ENCODE measurements at regions of chr5 and their contacts with region 1.

Region 1: GRCh38 chr5:131796793-131797693 is at the start of gene FNIP1:
- DNase-seq: peak; percentile 96 to 99 (median 97)
- ATAC-seq: peak; percentile 98
- H3K4me3 ChIP-seq: peak within 1 kb of the TSS; percentile 90
- H3K4me3 Mint-ChIP-seq: peak within 1 kb of the TSS; percentile 88 to 99 (median 97)
- H3K27ac ChIP-seq: peak within 1 kb of the TSS; percentile 95
- H3K27ac Mint-ChIP-seq: peak within 1 kb of the TSS; percentile 92 to 98 (median 97)
- H3K4me1 ChIP-seq: peaks cover 0 to 19% of the 10 kb centered on the region in 2 donors
- H3K4me1 Mint-ChIP-seq: peaks cover 11 to 41% (median 36%) of the 10 kb centered on the region in 7 donors
- H3K27me3 ChIP-seq: no peaks in the 10 kb centered on the region
- H3K27me3 Mint-ChIP-seq: peaks cover 0 to 10% (median 0%) of the 10 kb centered on the region in 5 donors
- total RNA-seq, gene FNIP1: 30.5 to 48.5 (median 40.3) TPM

Region 2: DNA sequence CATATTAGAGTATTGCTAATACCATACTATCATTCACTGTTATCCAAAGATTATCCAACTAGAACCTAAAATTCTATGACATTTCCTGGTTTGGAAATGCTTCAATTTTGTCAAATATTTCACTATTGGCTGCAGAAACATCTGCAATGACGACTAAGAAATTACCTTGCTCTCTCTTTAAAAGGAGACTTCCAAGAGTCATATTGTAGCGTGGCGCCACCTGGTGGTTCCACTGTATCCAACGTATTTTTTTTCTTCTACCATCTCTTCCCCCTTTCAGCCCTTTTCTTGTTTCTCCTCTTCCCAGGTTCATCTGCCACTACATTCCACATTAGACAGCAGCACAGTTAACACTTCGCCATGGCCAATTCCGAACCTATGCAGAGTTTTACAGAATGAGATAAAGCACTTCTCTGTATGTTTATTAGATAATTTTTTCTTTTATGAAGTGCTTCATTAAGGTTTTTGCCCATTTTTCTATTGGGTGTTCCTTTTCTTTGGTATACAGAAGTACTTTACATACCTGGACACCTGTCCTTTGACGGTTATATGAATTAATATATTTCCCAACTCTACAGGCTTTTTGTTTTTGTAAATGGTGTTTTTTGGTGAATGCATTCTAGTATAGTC is 379.7 kb before region 1 on chr5:
- CTCF ChIA-PET with region 1: no interaction called
- POLR2A ChIA-PET with region 1: no interaction called
- intact Hi-C with region 1: loop called in 1 of 2 experiments (anchors 5 kb)
- DNase-seq: peak; percentile 61 to 78 (median 74)
- ATAC-seq: peak; percentile 81
- H3K4me3 ChIP-seq: no peak overlapping the region
- H3K4me3 Mint-ChIP-seq: peak overlapping the region in 7 of 10 donors; percentile 27 to 70 (median 45)
- H3K27ac ChIP-seq: peak overlapping the region; percentile 23
- H3K27ac Mint-ChIP-seq: peak overlapping the region; percentile 68 to 95 (median 81)
- H3K4me1 ChIP-seq: peaks cover 8 to 14% of the 10 kb centered on the region in 2 donors
- H3K4me1 Mint-ChIP-seq: peaks cover 17 to 52% (median 46%) of the 10 kb centered on the region in 7 donors
- H3K27me3 ChIP-seq: no peaks in the 10 kb centered on the region
- H3K27me3 Mint-ChIP-seq: no peaks in the 10 kb centered on the region

Region 3: GRCh38 chr5:131589510-131590348 is 207.3 kb before region 1 on chr5:
- CTCF ChIA-PET with region 1: interaction called, 11 read pairs
- POLR2A ChIA-PET with region 1: interaction called, 6 read pairs
- intact Hi-C with region 1: loop called (anchors 1 to 2 kb)
- DNase-seq: peak in 8 of 9 donors; percentile 8 to 71 (median 62)
- ATAC-seq: peak; percentile 80
- H3K4me3 ChIP-seq: no peak overlapping the region
- H3K4me3 Mint-ChIP-seq: no peak overlapping the region
- H3K27ac ChIP-seq: peak overlapping the region; percentile 9
- H3K27ac Mint-ChIP-seq: peak overlapping the region; percentile 10 to 75 (median 52)
- H3K4me1 ChIP-seq: peaks cover 4 to 5% of the 10 kb centered on the region in 2 donors
- H3K4me1 Mint-ChIP-seq: peaks cover 21 to 63% (median 58%) of the 10 kb centered on the region in 7 donors
- H3K27me3 ChIP-seq: no peaks in the 10 kb centered on the region
- H3K27me3 Mint-ChIP-seq: no peaks in the 10 kb centered on the region

Region 4: DNA sequence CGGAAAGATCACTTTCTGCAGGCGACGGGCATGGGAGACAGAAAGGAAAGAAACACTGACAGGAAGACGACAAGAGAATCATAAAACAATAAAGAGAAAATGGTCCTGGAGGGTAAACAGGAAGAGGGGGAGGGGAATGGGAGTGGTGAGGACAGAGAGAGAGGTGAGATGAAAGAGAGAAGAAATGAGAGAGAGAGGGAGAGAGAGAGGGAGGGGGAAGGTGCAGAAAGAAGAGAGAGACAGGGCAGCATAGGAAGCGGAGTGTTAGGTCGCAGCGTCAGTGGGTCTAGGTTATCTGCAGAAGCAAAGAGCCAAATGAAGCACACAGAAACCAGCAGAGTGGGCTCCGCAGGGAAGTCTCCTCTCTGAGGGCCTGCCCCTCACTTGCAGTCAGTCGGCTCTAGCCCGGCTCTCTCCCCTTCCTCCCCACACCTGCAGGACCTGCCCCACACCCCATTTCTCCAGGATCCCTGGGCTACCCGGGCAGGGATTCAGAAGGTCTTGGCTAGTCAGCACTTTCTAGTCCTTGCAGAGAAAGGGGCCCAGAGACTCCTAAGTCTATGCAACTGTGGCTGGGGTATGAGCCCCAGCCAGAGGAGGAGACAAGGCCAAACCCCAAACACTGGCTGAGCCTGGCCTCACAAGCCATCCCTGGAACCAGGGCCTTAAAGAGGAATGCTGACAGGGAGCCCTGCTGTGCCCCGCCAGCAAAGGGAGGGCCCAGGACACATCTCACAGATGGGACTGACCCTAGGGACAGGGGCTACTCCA is 178.1 kb after region 1 on chr5:
- CTCF ChIA-PET with region 1: no interaction called
- POLR2A ChIA-PET with region 1: no interaction called
- intact Hi-C with region 1: loop called in 1 of 2 experiments (anchors 1 kb)
- DNase-seq: peak in 7 of 9 donors; percentile 23 to 76 (median 65)
- ATAC-seq: peak; percentile 74
- H3K4me3 ChIP-seq: peak overlapping the region; percentile 61
- H3K4me3 Mint-ChIP-seq: peak overlapping the region; percentile 79 to 97 (median 84)
- H3K27ac ChIP-seq: peak overlapping the region; percentile 76
- H3K27ac Mint-ChIP-seq: peak overlapping the region; percentile 90 to 99 (median 95)
- H3K4me1 ChIP-seq: peaks cover 34 to 46% of the 10 kb centered on the region in 2 donors
- H3K4me1 Mint-ChIP-seq: peaks cover 34 to 85% (median 75%) of the 10 kb centered on the region in 7 donors
- H3K27me3 ChIP-seq: no peaks in the 10 kb centered on the region
- H3K27me3 Mint-ChIP-seq: peaks cover 0 to 7% (median 0%) of the 10 kb centered on the region in 5 donors

Region 5: GRCh38 chr5:132064738-132065331 is 267.8 kb after region 1 on chr5:
- CTCF ChIA-PET with region 1: no interaction called
- POLR2A ChIA-PET with region 1: no interaction called
- intact Hi-C with region 1: loop called in 1 of 2 experiments (anchors 1 kb)
- DNase-seq: peak; percentile 40 to 82 (median 64)
- ATAC-seq: peak; percentile 80
- H3K4me3 ChIP-seq: no peak overlapping the region
- H3K4me3 Mint-ChIP-seq: no peak overlapping the region
- H3K27ac ChIP-seq: no peak overlapping the region
- H3K27ac Mint-ChIP-seq: peak overlapping the region in 2 of 9 donors; percentile 30 to 79
- H3K4me1 ChIP-seq: peaks cover 0 to 9% of the 10 kb centered on the region in 2 donors
- H3K4me1 Mint-ChIP-seq: peaks cover 0 to 62% (median 5%) of the 10 kb centered on the region in 7 donors
- H3K27me3 ChIP-seq: no peaks in the 10 kb centered on the region
- H3K27me3 Mint-ChIP-seq: peaks cover 0 to 7% (median 0%) of the 10 kb centered on the region in 5 donors

Region 6: GRCh38 chr5:132866342-132867045 is 1069.5 kb after region 1 on chr5 and contains the starts of genes GDF9 and UQCRQ:
- CTCF ChIA-PET with region 1: no interaction called
- POLR2A ChIA-PET with region 1: no interaction called
- intact Hi-C with region 1: loop called in 1 of 2 experiments (anchors 5 kb)
- DNase-seq: peak; percentile 72 to 97 (median 93)
- ATAC-seq: peak; percentile 99
- H3K4me3 ChIP-seq: peak within 1 kb of the TSS; percentile 98
- H3K4me3 Mint-ChIP-seq: peak within 1 kb of the TSS; percentile 98 to 100 (median 100)
- H3K27ac ChIP-seq: peak within 1 kb of the TSS; percentile 96
- H3K27ac Mint-ChIP-seq: peak within 1 kb of the TSS; percentile 97 to 100 (median 100)
- H3K4me1 ChIP-seq: peaks cover 7 to 12% of the 10 kb centered on the region in 2 donors
- H3K4me1 Mint-ChIP-seq: peaks cover 11 to 36% (median 27%) of the 10 kb centered on the region in 7 donors
- H3K27me3 ChIP-seq: no peaks in the 10 kb centered on the region
- H3K27me3 Mint-ChIP-seq: peaks cover 0 to 8% (median 0%) of the 10 kb centered on the region in 5 donors
- total RNA-seq, gene GDF9: 0.48 to 2.0 (median 1.6) TPM
- total RNA-seq, gene UQCRQ: 101 to 338 (median 110) TPM